HepG2 (cell line): ENCODE measurements at regions of chr9 and their contacts with region 1.

Region 1: GRCh38 chr9:69549310-69550202 is 122.6 kb downstream of the APBA1 start:
- DNase-seq: peak; percentile 45
- ATAC-seq: peak; percentile 52
- H3K4me3 ChIP-seq: no peak overlapping the region
- H3K27ac ChIP-seq: no peak overlapping the region
- H3K4me1 ChIP-seq: no peaks in the 10 kb centered on the region
- H3K27me3 ChIP-seq: peaks cover 1 to 7% of the 10 kb centered on the region in 2 experiments; a peak in 1 of 5 replicates
- CTCF ChIP-seq: peak; percentile 82
- EP300 ChIP-seq: no peak
- POLR2A ChIP-seq: no peak
- RAD21 ChIP-seq: peak; percentile 43; the same call in 1 of the 2 replicates

Region 2: DNA sequence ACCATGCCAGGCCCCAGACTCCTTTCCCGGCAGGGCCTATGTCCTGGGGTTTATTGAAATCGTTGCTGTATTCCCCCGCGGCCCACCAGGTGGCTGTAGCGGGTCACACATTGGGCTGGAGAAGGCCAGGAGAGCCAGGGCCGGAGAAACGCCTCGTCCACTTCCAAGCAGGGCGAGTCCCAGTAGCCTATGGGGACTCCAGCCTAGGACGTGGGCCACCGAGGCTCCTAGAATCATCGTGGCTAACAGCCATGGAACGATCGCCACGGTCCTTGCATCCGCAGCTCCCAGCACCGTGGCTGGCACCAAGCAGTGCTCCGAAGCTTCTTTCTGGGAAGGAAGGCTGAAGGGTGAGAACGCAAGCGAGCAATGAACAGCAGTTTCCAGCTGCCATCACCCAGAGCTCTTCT is 136.8 kb before region 1 on chr9:
- CTCF ChIA-PET with region 1: interaction called, 9 read pairs
- POLR2A ChIA-PET with region 1: no interaction called
- in situ Hi-C with region 1: no loop called
- intact Hi-C with region 1: loop called (anchors 2 kb)
- DNase-seq: peak; percentile 39
- ATAC-seq: peak; percentile 100
- H3K4me3 ChIP-seq: no peak overlapping the region
- H3K27ac ChIP-seq: no peak overlapping the region
- H3K4me1 ChIP-seq: no peaks in the 10 kb centered on the region
- H3K27me3 ChIP-seq: peaks cover 0 to 25% of the 10 kb centered on the region in 2 experiments; a peak in 2 of 5 replicates
- CTCF ChIP-seq: peak; percentile 84
- EP300 ChIP-seq: no peak
- POLR2A ChIP-seq: no peak
- RAD21 ChIP-seq: peak; percentile 68

Region 3: DNA sequence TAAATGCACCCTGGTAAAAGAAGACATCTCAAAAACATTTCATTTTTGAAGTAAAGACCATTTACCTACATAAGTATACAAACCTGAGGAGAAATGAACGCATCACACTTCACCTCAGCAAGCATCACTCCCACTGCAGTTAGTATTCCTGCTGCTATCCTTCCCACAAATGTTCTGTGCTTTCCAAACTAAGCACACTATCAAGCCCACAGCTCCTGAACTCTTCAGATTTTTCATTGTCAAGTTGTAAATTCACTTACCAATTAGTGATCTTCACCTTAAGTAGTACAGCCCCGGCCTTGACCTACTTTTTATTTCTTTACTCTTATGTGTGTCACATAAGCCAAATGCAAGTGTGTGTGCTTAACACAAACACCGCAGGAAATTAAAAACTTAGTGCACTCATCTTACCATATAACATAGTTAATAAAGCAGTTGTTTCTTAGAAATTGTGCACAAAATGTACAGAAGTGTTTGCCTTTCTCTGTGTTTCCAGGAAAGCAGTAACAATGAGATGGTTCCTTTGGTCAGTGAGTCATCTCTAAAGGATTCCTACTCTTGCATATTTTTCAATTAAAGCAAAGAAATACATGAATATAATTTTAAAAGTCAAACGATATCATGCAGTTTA is 46.8 kb before region 1 on chr9:
- CTCF ChIA-PET with region 1: no interaction called
- POLR2A ChIA-PET with region 1: no interaction called
- in situ Hi-C with region 1: no loop called
- intact Hi-C with region 1: no loop called
- DNase-seq: no peak
- ATAC-seq: no peak
- H3K4me3 ChIP-seq: no peak overlapping the region
- H3K27ac ChIP-seq: no peak overlapping the region
- H3K4me1 ChIP-seq: no peaks in the 10 kb centered on the region
- H3K27me3 ChIP-seq: peaks cover 0 to 37% of the 10 kb centered on the region in 2 experiments; a peak in 3 of 5 replicates
- CTCF ChIP-seq: no peak
- EP300 ChIP-seq: no peak
- POLR2A ChIP-seq: no peak
- RAD21 ChIP-seq: no peak

Region 4: DNA sequence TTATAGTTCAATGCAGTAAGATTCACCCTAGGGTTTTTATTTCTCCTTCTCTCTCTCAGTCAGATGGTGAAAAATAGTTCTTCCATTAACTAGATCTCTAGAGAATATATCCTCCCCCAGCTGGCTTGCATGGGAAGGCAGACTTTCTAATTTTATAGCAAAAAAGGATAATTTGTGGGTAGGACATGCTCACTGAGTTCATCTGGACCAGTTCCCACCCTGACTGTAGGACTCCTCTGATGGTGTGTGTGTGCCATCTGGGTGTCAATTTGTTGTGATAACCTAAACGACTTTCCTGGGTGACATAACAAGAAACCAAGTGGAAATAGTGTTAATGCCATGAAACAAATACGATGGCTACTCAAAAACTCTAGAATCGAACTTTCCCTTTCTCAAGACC is 77.7 kb after region 1 on chr9:
- CTCF ChIA-PET with region 1: no interaction called
- POLR2A ChIA-PET with region 1: no interaction called
- in situ Hi-C with region 1: no loop called
- intact Hi-C with region 1: no loop called
- DNase-seq: no peak
- ATAC-seq: no peak
- H3K4me3 ChIP-seq: no peak overlapping the region
- H3K27ac ChIP-seq: no peak overlapping the region
- H3K4me1 ChIP-seq: no peaks in the 10 kb centered on the region
- H3K27me3 ChIP-seq: no peaks in the 10 kb centered on the region
- CTCF ChIP-seq: no peak
- EP300 ChIP-seq: no peak
- POLR2A ChIP-seq: no peak
- RAD21 ChIP-seq: no peak

Region 5: GRCh38 chr9:69877854-69878514 is 328.4 kb after region 1 on chr9:
- CTCF ChIA-PET with region 1: interaction called, 8 read pairs
- POLR2A ChIA-PET with region 1: no interaction called
- in situ Hi-C with region 1: no loop called
- intact Hi-C with region 1: loop called (anchors 1 kb)
- DNase-seq: peak; percentile 43
- ATAC-seq: peak; percentile 75
- H3K4me3 ChIP-seq: no peak overlapping the region
- H3K27ac ChIP-seq: no peak overlapping the region
- H3K4me1 ChIP-seq: no peaks in the 10 kb centered on the region
- H3K27me3 ChIP-seq: peaks cover 0 to 4% of the 10 kb centered on the region in 2 experiments; a peak in 1 of 5 replicates
- CTCF ChIP-seq: peak; percentile 71
- EP300 ChIP-seq: no peak
- POLR2A ChIP-seq: no peak
- RAD21 ChIP-seq: peak; percentile 59; the same call in 1 of the 2 replicates